ENCODE measurements at regions of chr17 and their contacts with region 1.

Region 1: GRCh38 chr17:34254651-34255380 is at the start of gene CCL2:
- DNase-seq: peak; percentile 72 to 85 (median 83)
- ATAC-seq: peak; percentile 33 to 75 (median 63)
- H3K4me3 ChIP-seq: peak within 1 kb of the TSS; percentile 9 to 65 (median 54)
- H3K27ac ChIP-seq: peak within 1 kb of the TSS; percentile 56 to 94 (median 84)
- H3K4me1 ChIP-seq: peaks cover 21 to 78% (median 65%) of the 10 kb centered on the region in 12 donors
- H3K27me3 ChIP-seq: no peaks in the 10 kb centered on the region
- CTCF ChIP-seq: no peak
- POLR2A ChIP-seq: peak in 1 of 2 donors; percentile 81
- total RNA-seq, gene CCL2: 11.8 to 512 (median 43.9) TPM

Region 2: GRCh38 chr17:33142705-33143299 is 1112.0 kb before region 1 on chr17:
- intact Hi-C with region 1: no loop called
- DNase-seq: no peak
- ATAC-seq: no peak
- H3K4me3 ChIP-seq: no peak overlapping the region
- H3K27ac ChIP-seq: no peak overlapping the region
- H3K4me1 ChIP-seq: no peaks in the 10 kb centered on the region
- H3K27me3 ChIP-seq: peaks cover 0 to 10% (median 0%) of the 10 kb centered on the region in 9 donors
- CTCF ChIP-seq: no peak
- POLR2A ChIP-seq: no peak

Region 3: GRCh38 chr17:34199932-34200534 is 54.8 kb before region 1 on chr17:
- intact Hi-C with region 1: loop called in 5 of 10 experiments (anchors 2 to 10 kb)
- DNase-seq: peak in 4 of 5 donors; percentile 63 to 79 (median 71)
- ATAC-seq: peak; percentile 81 to 94 (median 92)
- H3K4me3 ChIP-seq: no peak overlapping the region
- H3K27ac ChIP-seq: peak overlapping the region in 2 of 12 donors; percentile 30 to 57
- H3K4me1 ChIP-seq: peaks cover 0 to 32% (median under 1%) of the 10 kb centered on the region in 12 donors
- H3K27me3 ChIP-seq: peaks cover 0 to 17% (median 0%) of the 10 kb centered on the region in 9 donors
- CTCF ChIP-seq: peak; percentile 99 to 100 (median 100)
- POLR2A ChIP-seq: no peak

Region 4: GRCh38 chr17:34235389-34236028 is 19.3 kb before region 1 on chr17:
- intact Hi-C with region 1: loop called in 2 of 10 experiments (anchors 1 to 2 kb)
- DNase-seq: peak; percentile 78 to 88 (median 85)
- ATAC-seq: peak; percentile 58 to 95 (median 82)
- H3K4me3 ChIP-seq: no peak overlapping the region
- H3K27ac ChIP-seq: peak overlapping the region in 11 of 12 donors; percentile 61 to 87 (median 83)
- H3K4me1 ChIP-seq: peaks cover 6 to 74% (median 64%) of the 10 kb centered on the region in 12 donors
- H3K27me3 ChIP-seq: no peaks in the 10 kb centered on the region
- CTCF ChIP-seq: no peak
- POLR2A ChIP-seq: no peak

Region 5: DNA sequence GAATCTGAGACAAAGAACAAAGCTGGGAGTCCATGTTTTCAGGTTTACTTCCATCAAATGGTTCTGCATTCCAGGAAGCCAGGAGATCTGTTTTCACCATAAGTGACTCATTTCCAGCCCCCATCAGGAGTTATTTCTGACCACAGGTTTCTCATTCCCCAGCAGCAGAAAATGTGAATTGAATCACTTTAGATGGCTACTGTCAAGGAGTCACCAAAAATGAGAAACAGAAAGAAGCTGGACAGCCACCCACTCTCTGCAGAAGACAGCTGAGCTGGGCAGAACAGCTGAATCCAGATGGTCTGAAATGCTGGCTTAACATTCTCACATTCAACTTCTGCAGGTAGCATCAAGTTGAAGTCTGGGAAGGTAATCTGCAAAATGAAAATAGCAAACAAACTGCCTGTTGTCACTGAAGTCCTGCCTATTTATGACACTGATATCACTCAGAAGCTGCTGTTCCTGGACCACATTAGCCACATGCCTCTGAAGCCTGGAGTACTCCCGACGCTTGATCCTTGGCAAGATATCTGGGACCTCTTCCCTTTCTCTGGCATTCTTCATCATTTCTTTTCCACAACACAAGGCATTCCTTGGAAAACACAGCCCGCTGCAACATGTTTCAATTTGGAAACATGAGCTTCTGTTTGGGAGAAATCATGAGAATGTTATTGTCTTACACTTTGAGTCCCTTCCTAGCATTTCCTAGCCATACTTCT is 46.0 kb after region 1 on chr17:
- intact Hi-C with region 1: loop called in 5 of 10 experiments (anchors 2 to 5 kb)
- DNase-seq: no peak
- ATAC-seq: peak in 3 of 4 donors; percentile 34 to 90 (median 81)
- H3K4me3 ChIP-seq: no peak overlapping the region
- H3K27ac ChIP-seq: peak overlapping the region in 11 of 12 donors; percentile 18 to 64 (median 58)
- H3K4me1 ChIP-seq: peaks cover 0 to 41% (median 20%) of the 10 kb centered on the region in 12 donors
- H3K27me3 ChIP-seq: no peaks in the 10 kb centered on the region
- CTCF ChIP-seq: no peak
- POLR2A ChIP-seq: no peak

Region 6: GRCh38 chr17:34306466-34306865 is 51.6 kb after region 1 on chr17:
- intact Hi-C with region 1: loop called in 5 of 10 experiments (anchors 2 to 5 kb)
- DNase-seq: no peak
- ATAC-seq: peak in 3 of 4 donors; percentile 82 to 89 (median 86)
- H3K4me3 ChIP-seq: no peak overlapping the region
- H3K27ac ChIP-seq: peak overlapping the region in 5 of 12 donors; percentile 10 to 72 (median 25)
- H3K4me1 ChIP-seq: peaks cover 0 to 56% (median 21%) of the 10 kb centered on the region in 12 donors
- H3K27me3 ChIP-seq: no peaks in the 10 kb centered on the region
- CTCF ChIP-seq: peak in 11 of 12 donors; percentile 37 to 67 (median 55)
- POLR2A ChIP-seq: no peak

Measured in heart left ventricle (tissue), 16 donors.